ENCODE measurements at regions of chr13 and their contacts with region 1.

Region 1: DNA sequence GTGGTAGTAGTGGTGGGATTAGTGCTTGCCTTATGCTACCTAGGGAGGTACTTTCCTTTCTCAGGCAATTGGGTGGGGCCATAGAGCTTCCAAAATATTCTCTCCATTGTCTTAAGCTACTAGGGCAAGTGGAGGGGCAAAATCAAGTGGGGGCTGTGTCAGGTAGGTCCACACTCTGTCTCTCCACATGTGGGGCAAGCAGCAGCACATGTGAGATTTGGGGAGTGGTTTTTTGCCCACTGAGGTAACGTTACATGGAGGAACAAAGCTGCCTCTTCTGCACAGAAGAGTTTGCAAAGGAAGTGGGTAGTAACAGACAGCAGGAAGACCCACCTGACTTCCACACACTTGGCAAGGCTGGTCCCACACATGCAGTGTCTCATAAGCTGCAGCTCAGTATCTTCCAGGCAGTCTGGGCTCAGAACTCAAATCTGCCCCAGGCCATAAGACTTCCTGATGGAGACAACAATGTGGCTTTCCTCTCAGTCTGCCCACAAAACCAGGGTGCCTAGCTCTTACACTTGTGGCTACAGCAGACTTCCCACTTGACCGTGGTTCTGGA is 1581.5 kb upstream of the PCDH20 start:
- DNase-seq: no peak
- ATAC-seq: no peak
- H3K4me3 Mint-ChIP-seq: no peak overlapping the region
- H3K27ac Mint-ChIP-seq: no peak overlapping the region
- H3K4me1 Mint-ChIP-seq: no peaks in the 10 kb centered on the region
- H3K27me3 Mint-ChIP-seq: no peaks in the 10 kb centered on the region
- CTCF ChIP-seq: no peak

Region 2: GRCh38 chr13:61954092-61954491 is 1043.0 kb before region 1 on chr13:
- CTCF ChIA-PET with region 1: no interaction called
- POLR2A ChIA-PET with region 1: no interaction called
- intact Hi-C with region 1: loop called (anchors 5 kb)
- DNase-seq: no peak
- ATAC-seq: no peak
- H3K4me3 Mint-ChIP-seq: no peak overlapping the region
- H3K27ac Mint-ChIP-seq: no peak overlapping the region
- H3K4me1 Mint-ChIP-seq: no peaks in the 10 kb centered on the region
- H3K27me3 Mint-ChIP-seq: no peaks in the 10 kb centered on the region
- CTCF ChIP-seq: no peak